ENCODE measurements at regions of chr19 and their contacts with region 1.

Region 1: GRCh38 chr19:49430678-49431329 is 5.6 kb downstream of the GFY start:
- DNase-seq: no peak
- ATAC-seq: no peak

Region 2: GRCh38 chr19:49264258-49264657 is 166.5 kb before region 1 on chr19:
- intact Hi-C with region 1: loop called in 1 of 2 experiments (anchors 10 kb)
- DNase-seq: no peak
- ATAC-seq: no peak

Region 3: DNA sequence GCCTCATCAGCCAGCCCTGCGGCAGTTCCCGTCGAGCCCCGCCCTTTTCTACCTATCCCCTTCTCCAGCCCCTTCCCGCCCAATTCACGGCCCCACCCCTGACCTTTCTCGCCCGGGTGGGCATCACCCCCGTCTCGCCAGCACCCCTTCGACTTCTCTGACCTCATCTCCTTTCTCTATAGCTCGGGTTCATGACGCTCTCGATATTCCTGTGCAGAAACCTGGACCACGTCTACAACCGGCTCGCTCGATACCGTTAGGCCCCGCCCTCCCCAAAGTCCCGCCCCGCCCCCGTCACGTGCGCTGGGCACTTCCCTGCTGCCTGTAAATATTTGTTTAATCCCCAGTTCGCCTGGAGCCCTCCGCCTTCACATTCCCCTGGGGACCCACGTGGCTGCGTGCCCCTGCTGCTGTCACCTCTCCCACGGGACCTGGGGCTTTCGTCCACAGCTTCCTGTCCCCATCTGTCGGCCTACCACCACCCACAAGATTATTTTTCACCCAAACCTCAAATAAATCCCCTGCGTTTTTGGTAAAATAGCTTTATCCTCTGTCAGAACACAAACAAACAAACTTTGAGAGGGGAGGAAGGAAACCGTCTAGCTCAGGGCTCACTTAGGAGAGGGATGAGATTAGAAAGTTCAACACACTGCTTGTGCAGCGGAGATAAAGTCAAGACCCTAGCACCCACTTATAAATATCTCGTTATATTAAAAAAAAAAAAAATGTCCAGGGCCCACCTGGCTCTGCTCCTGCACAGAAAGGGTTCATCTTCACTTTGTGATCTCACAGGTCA is 90.5 kb before region 1 on chr19:
- intact Hi-C with region 1: no loop called
- DNase-seq: peak; percentile 62 to 73
- ATAC-seq: peak; percentile 46

Measured in left colon (tissue), 2 donors.